Endothelial cell of umbilical vein (primary cell): ENCODE measurements at regions of chr20 and their contacts with region 1.

Region 1: GRCh38 chr20:52219441-52219840 is 27.9 kb upstream of the ZFP64 start:
- DNase-seq: no peak
- H3K4me3 ChIP-seq: no peak overlapping the region
- H3K27ac ChIP-seq: no peak overlapping the region
- H3K4me1 ChIP-seq: no peaks in the 10 kb centered on the region
- H3K27me3 ChIP-seq: peaks cover 0 to 5% of the 10 kb centered on the region in 2 experiments
- CTCF ChIP-seq: no peak
- POLR2A ChIP-seq: no peak

Region 2: DNA sequence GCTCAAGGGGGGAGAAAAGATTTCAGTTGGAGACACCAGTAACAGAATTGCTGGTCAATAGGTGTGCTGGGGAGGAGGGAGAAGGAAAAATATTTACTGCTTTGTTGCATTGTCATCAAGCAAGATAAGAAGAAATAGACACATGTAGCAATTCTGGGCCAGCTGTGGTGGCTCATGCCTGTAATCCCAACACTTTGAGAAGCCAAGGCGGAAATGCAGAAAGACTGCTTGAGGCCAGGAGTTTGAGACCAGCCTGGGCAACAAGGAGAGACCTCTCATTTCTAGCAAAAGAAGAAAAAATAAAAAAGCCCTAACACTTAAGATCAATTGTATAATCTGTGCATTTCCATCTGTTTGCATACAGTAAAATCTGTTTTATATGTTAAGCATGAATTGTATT is 154.5 kb before region 1 on chr20:
- CTCF ChIA-PET with region 1: no interaction called
- POLR2A ChIA-PET with region 1: no interaction called
- dilution Hi-C with region 1: no loop called
- intact Hi-C with region 1: no loop called
- DNase-seq: no peak
- H3K4me3 ChIP-seq: no peak overlapping the region
- H3K27ac ChIP-seq: no peak overlapping the region
- H3K4me1 ChIP-seq: peaks cover 9% of the 10 kb centered on the region
- H3K27me3 ChIP-seq: no peaks in the 10 kb centered on the region
- CTCF ChIP-seq: no peak
- POLR2A ChIP-seq: no peak

Region 3: DNA sequence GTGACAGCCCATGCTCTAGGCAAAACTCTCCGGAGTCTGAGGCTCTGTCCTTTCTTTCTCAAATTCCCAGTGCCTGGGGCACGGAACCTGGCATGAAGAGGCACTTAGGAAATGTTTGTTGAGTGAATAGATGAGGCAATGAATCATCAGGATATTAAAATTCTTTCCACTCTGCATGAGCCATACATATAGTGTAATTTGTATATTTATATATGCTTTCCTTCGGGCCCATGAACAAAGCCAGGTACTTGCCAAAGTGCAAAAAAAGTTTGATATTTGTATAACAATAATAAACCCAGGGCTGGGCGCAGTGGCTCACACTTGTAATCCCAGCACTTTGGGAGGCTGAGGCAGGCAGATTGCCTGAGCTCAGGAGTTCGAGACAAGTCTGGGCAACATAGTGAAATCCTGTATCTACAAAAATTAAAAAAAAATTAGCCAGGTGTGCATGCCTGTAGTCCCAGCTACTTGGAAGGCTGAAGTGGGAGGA is 1586.5 kb after region 1 on chr20:
- CTCF ChIA-PET with region 1: no interaction called
- POLR2A ChIA-PET with region 1: no interaction called
- dilution Hi-C with region 1: no loop called
- intact Hi-C with region 1: loop called (anchors 10 kb)
- DNase-seq: peak; percentile 64
- H3K4me3 ChIP-seq: no peak overlapping the region
- H3K27ac ChIP-seq: no peak overlapping the region
- H3K4me1 ChIP-seq: peaks cover 3% of the 10 kb centered on the region
- H3K27me3 ChIP-seq: no peaks in the 10 kb centered on the region
- CTCF ChIP-seq: no peak
- POLR2A ChIP-seq: no peak

Region 4: DNA sequence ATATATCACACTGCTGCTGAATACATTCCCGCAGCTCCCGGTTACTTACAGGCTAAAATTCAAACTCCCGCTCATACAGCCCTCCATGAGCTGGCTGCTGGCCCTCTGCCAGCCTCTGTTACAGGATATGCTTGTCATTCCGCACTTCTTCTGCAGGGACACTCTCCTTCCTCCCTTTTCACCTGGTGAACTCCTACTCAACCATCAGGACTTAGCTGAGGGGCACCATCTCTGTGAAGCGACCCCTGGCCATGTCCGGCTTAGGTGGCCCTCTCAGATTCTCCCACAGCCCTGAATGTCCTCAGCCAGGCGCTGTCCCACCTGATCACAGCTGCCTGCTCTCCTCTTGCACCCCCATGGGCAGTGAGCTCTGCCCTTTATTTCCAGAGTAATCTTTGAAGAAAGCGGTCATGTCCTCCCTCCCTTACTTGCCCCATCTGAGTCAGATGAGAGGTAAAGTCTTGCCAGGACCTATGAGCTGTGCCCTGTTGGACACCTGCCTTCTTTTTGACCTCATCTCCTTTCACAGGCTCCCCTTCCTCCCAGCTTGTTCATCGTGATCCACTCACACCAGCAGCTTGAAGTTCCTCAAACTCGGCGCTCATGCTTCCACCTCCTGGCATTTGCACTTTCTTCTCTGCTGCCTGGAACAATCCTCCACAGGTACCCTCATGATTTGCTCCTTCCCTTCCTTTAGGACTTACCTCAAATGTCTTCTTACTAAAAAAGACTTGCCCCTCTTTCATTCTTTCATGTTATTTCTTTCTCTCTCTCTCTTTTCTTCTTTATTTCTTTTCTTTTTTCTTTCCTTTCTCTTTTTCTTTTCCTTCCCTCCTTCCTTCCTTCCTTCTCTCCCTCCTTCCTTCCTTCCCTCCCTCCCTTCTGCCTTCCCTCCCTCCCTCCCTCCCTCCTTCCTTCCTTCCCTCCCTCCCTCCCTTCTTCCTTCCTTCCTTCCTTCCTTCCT is 1948.8 kb after region 1 on chr20:
- CTCF ChIA-PET with region 1: no interaction called
- POLR2A ChIA-PET with region 1: no interaction called
- dilution Hi-C with region 1: no loop called
- intact Hi-C with region 1: no loop called
- DNase-seq: no peak
- H3K4me3 ChIP-seq: no peak overlapping the region
- H3K27ac ChIP-seq: no peak overlapping the region
- H3K4me1 ChIP-seq: no peaks in the 10 kb centered on the region
- H3K27me3 ChIP-seq: peaks cover 16 to 21% of the 10 kb centered on the region in 2 experiments
- CTCF ChIP-seq: no peak
- POLR2A ChIP-seq: no peak